Activated CD4-positive, alpha-beta T cell treated with anti-CD3 and anti-CD28 coated beads, Interleukin-2, amount 10 ng/mL, durations not matched to agents 7 days and 5 days (primary cell): ENCODE measurements at regions of chr14 and their contacts with region 1.

Region 1: DNA sequence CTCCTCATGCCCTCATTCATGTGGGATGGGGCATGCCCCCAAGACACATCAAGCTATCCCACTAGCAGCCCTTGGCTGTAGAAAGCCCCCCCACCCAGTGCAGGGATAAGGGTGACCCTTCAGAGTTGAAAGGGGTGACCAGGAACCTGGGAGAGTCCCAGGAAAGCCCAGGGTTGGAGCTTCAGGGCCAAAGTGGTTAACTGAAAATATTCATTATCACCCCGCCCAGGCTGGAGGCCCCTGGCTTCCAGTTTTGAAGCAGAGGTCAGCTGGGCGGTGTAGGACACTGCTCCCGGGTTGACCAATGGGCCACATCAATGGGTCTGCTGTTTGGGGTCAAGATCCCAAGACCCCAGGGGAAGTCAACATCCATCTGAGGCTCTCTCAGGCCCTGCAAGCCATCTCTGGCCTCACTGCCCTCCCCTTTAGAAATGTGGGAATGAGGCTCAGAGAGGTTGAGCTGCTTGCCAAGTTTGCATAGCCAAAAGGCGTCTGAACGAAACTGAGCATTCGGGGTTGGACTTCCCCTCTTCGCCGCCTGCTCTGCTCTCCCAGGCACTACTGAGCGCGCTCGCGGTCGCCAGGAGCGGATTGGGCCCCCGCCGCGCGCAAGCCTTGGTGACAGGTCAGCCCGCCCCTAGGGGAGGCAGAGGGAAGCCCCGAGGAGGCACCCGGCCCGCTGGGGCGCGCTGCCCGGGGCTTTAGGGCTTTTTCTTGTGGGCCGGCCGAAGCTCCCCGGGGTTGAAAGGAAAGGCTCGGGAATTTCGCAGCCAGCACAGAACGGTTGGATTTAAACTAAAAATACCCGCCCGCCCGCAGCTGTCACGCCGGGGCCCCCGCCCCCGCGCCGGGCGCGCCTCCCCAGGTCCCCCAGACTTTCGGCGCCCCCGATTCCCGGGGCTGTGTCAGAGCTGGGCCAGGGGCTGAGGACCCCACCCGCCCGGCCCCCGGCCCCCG is 576 bp downstream of the SYNE3 start:
- DNase-seq: peak; percentile 85
- H3K4me3 Mint-ChIP-seq: peak overlapping the region; percentile 91
- H3K27ac Mint-ChIP-seq: peak overlapping the region; percentile 90
- H3K4me1 Mint-ChIP-seq: peaks cover 72% of the 10 kb centered on the region
- H3K27me3 Mint-ChIP-seq: no peaks in the 10 kb centered on the region

Region 2: GRCh38 chr14:95527387-95528002 is 11.6 kb after region 1 on chr14:
- CTCF ChIA-PET with region 1: interaction called, 33 read pairs
- POLR2A ChIA-PET with region 1: interaction called, 4 read pairs
- DNase-seq: peak; percentile 64
- H3K4me3 Mint-ChIP-seq: no peak overlapping the region
- H3K27ac Mint-ChIP-seq: peak overlapping the region; percentile 78
- H3K4me1 Mint-ChIP-seq: peaks cover 80% of the 10 kb centered on the region
- H3K27me3 Mint-ChIP-seq: no peaks in the 10 kb centered on the region

Region 3: DNA sequence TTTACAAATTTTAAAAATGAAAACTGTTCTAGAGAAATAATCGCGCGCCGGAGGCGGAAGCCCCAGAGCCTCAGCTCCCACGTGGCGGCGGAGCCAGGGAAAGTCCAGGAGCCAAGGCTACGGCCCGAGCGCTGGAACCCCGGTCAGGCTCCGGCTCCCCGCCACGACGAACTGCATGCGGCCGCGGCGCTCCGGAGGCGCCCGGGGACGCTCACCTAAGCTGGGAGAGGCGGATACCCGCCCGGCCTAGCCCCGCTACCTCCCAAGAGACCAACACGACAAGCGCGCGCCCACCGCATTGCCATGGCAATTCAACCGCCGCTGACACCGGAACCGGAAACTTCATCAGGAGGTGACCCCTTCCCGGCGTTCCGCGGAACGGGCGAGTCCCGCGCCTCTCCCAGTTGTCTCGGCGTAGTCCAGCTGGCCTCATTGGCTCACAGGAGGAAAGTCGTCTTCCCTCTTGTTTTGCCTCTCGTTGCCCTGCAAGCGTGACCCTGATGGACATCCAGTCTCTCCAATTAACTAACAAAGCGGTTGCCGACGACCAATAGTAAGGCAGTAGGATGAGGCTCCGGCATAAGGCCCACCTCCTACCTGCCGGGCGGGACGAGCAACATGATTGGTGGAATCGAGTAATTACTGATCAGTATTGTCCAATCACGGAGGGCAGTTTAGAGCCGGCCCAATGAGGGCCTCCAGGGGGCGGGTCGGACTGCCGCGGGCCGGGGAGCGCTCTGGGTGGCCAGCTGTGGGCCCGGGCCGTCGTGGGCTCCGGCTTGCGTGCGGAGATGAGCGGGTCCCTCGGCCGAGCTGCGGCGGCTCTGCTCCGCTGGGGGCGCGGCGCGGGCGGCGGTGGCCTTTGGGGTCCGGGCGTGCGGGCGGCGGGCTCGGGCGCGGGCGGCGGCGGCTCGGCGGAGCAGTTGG is 18.7 kb after region 1 on chr14 and contains the start of gene GLRX5:
- CTCF ChIA-PET with region 1: interaction called, 13 read pairs
- POLR2A ChIA-PET with region 1: interaction called, 4 read pairs
- DNase-seq: peak; percentile 99
- H3K4me3 Mint-ChIP-seq: peak within 1 kb of the TSS; percentile 87
- H3K27ac Mint-ChIP-seq: peak within 1 kb of the TSS; percentile 90
- H3K4me1 Mint-ChIP-seq: peaks cover 64% of the 10 kb centered on the region
- H3K27me3 Mint-ChIP-seq: no peaks in the 10 kb centered on the region
- total RNA-seq, gene GLRX5: 36.6 to 51.2 TPM